Psoas muscle (tissue), 8 donors: ENCODE measurements at regions of chrX and their contacts with region 1.

Region 1: DNA sequence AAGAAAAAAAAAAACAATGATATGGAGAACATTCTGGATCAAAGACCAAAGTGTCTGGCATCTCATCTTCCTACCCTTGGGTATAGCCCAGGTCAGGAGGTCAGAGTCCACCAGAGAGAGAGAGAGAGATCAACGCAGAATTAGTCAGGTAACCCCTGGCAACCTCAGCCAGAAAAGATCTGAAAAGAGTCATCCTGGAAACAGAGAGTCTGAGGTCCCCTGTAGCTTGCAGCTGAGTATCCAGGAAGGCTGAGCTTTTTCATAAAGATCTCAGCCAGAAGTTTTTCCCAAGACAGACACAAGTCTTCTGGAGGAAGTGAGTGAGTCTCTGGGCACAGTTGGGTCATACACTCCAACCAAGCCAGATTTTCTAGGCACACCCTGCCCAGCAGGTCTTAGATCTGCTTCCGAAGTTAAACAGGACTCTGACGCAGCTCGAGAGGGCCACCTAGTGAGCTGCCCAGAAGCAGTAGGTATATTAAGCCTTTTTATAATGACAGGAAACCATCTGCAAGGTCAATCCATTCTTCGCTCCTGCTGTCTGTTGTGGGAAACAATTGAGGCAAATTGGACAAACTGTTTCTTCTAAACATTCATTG is 35.7 kb downstream of the ACE2 start:
- DNase-seq: peak; percentile 50 to 75
- ATAC-seq: peak; percentile 86 to 98 (median 91)
- H3K4me3 ChIP-seq: no peak overlapping the region
- H3K27ac ChIP-seq: no peak overlapping the region
- H3K4me1 ChIP-seq: no peaks in the 10 kb centered on the region
- H3K27me3 ChIP-seq: peaks cover 0 to 17% (median 0%) of the 10 kb centered on the region in 3 donors
- CTCF ChIP-seq: peak; percentile 51

Region 2: GRCh38 chrX:15343075-15343476 is 222.0 kb before region 1 on chrX:
- intact Hi-C with region 1: loop called in 1 of 2 experiments (anchors 5 kb)
- DNase-seq: no peak
- ATAC-seq: peak in 2 of 4 donors; percentile 30 to 58
- H3K4me3 ChIP-seq: no peak overlapping the region
- H3K27ac ChIP-seq: no peak overlapping the region
- H3K4me1 ChIP-seq: no peaks in the 10 kb centered on the region
- H3K27me3 ChIP-seq: peaks cover 0 to 5% (median 0%) of the 10 kb centered on the region in 3 donors
- CTCF ChIP-seq: no peak

Region 3: GRCh38 chrX:15497865-15498264 is 67.2 kb before region 1 on chrX:
- intact Hi-C with region 1: loop called (anchors 2 to 5 kb)
- DNase-seq: no peak
- ATAC-seq: no peak
- H3K4me3 ChIP-seq: no peak overlapping the region
- H3K27ac ChIP-seq: no peak overlapping the region
- H3K4me1 ChIP-seq: no peaks in the 10 kb centered on the region
- H3K27me3 ChIP-seq: peaks cover 0 to 10% (median 0%) of the 10 kb centered on the region in 3 donors
- CTCF ChIP-seq: peak; percentile 55

Region 4: DNA sequence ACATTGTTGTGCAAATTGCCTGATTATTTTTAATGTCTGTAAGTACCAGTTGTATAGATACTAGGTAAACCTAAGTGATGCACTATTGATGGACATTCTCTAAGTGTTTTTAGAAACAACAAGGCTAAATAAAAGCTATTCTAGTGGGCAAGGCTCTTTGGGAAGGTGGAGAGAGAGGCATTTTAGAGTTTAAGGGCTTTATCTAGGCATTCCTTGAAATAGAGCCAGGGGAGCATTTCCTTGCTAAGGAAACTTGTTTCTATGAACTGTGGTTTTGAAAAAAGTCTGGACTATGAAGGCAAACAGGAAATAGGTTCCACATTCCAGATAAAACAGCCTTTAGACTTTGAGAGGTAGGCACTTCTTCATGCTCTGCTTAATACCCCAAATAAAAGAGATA is 40.7 kb before region 1 on chrX:
- intact Hi-C with region 1: no loop called
- DNase-seq: no peak
- ATAC-seq: no peak
- H3K4me3 ChIP-seq: no peak overlapping the region
- H3K27ac ChIP-seq: no peak overlapping the region
- H3K4me1 ChIP-seq: no peaks in the 10 kb centered on the region
- H3K27me3 ChIP-seq: peaks cover 0 to 10% (median 0%) of the 10 kb centered on the region in 3 donors
- CTCF ChIP-seq: no peak

Region 5: DNA sequence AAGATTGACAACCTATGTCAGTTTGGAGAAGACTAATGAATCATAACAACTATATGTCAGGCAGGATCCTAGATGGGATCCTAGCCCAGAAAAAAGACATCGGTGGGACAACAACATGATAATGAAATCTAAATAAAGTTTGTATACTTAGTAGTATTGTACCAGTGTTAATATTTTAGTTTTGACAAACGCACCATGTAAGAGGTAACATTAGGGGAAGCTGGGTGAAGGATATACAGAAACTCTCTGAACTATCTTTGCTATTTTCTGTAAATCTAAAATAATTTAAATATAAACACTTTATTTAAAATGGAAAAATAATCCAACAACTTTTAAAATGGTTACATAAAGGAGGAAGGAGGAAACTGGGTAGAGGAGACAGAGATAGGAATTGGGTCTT is 395.2 kb after region 1 on chrX:
- intact Hi-C with region 1: no loop called
- DNase-seq: no peak
- ATAC-seq: no peak
- H3K4me3 ChIP-seq: no peak overlapping the region
- H3K27ac ChIP-seq: no peak overlapping the region
- H3K4me1 ChIP-seq: no peaks in the 10 kb centered on the region
- H3K27me3 ChIP-seq: no peaks in the 10 kb centered on the region
- CTCF ChIP-seq: no peak